Natural killer cell (primary cell): ENCODE measurements at regions of chr10 and their contacts with region 1.

Region 1: DNA sequence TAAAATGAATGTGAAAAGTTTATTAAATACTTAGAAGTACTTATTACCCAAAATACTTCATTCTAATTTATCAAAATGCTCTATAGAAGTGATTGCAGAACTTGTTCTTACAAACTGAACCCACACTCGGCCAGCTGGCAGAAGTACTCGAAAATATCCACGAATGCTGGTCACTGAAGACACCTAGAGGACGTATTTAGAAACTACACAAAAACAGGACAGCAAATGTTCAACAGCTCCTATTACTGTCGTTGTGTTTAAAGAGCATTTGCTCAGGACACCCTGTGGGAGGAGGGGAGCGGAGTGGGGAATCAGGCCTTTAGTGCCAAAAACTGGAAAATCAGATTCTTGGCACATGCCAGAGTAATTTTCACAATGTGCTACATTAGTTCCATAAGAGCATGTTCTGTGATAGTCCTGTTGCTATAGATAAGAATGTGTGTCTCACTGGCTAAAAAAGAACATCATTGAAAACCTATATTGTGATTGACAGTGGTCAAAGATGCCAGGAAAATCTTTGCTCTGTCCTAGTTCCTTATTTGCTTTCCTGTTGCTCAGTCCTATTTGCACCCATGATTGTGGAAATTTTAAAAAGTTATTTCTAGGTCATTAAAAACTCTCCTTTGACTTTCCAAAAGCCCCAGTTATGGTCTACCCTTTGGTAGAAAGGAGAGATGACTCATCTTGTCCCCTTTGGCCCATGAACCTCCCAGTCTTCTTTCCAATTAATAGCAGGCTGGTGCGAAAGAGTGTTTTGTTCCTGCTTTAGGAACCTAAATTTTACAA is 49.0 kb upstream of the NRBF2 start:
- DNase-seq: peak; percentile 20 to 76
- ATAC-seq: peak; percentile 76 to 87 (median 77)
- H3K4me3 ChIP-seq: no peak overlapping the region
- H3K4me3 Mint-ChIP-seq: no peak overlapping the region
- H3K27ac ChIP-seq: no peak overlapping the region
- H3K27ac Mint-ChIP-seq: no peak overlapping the region
- H3K4me1 ChIP-seq: no peaks in the 10 kb centered on the region
- H3K4me1 Mint-ChIP-seq: no peaks in the 10 kb centered on the region
- H3K27me3 ChIP-seq: no peaks in the 10 kb centered on the region
- H3K27me3 Mint-ChIP-seq: peaks cover 14 to 32% of the 10 kb centered on the region in 2 donors
- CTCF ChIP-seq: peak; percentile 75

Region 2: DNA sequence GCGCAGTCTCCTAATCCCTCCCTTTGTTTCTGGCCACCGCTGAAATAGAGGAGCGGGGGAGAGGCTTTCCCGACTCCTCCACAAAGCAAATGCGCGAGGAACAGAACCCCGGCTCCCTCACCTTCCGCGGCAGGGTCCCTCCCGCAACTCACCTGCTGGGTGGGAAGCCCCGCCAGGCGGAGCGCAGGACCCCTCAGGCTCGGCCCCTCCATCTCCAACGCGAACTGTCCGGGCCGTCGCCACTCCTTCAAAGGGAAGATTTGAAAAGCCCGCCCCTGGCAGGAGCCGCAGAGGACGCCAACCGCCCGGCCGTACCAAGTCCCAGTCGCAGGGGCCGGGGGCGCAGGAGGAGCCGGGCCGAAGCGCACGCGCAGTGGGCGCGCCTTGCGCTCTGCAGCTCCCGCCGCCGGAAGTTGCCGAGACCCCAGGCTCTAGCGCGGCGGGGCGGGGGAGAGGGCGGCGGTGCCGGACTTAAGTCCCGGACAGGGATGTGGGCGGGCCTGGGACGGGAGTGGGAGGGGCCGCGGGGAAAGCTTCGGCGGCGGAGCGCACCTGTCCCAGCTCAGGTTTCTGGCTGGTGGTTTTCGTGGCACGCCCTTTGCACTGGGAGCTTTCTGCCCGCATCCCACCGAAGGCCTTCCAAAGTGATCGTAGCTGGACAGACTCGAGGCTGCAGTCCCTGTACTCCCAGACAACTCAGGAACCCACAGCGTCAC is 815.5 kb before region 1 on chr10 and contains the start of gene RTKN2:
- intact Hi-C with region 1: loop called (anchors 10 kb)
- DNase-seq: peak; percentile 65 to 79
- ATAC-seq: peak; percentile 89 to 93 (median 89)
- H3K4me3 ChIP-seq: peak within 1 kb of the TSS; percentile 79
- H3K4me3 Mint-ChIP-seq: peak within 1 kb of the TSS; percentile 94
- H3K27ac ChIP-seq: no peak within 1 kb of the TSS
- H3K27ac Mint-ChIP-seq: peak within 1 kb of the TSS; percentile 34 to 74
- H3K4me1 ChIP-seq: peaks cover 11% of the 10 kb centered on the region
- H3K4me1 Mint-ChIP-seq: peaks cover 17 to 28% of the 10 kb centered on the region in 2 donors
- H3K27me3 ChIP-seq: peaks cover 15% of the 10 kb centered on the region
- H3K27me3 Mint-ChIP-seq: peaks cover 15% of the 10 kb centered on the region in 2 donors
- CTCF ChIP-seq: no peak
- total RNA-seq, gene RTKN2: 0.31 to 0.61 (median 0.33) TPM

Region 3: GRCh38 chr10:62437696-62438095 is 646.4 kb before region 1 on chr10:
- intact Hi-C with region 1: loop called (anchors 1 kb)
- DNase-seq: peak in 1 of 2 donors; percentile 77
- ATAC-seq: peak; percentile 73 to 82 (median 76)
- H3K4me3 ChIP-seq: no peak overlapping the region
- H3K4me3 Mint-ChIP-seq: no peak overlapping the region
- H3K27ac ChIP-seq: no peak overlapping the region
- H3K27ac Mint-ChIP-seq: no peak overlapping the region
- H3K4me1 ChIP-seq: no peaks in the 10 kb centered on the region
- H3K4me1 Mint-ChIP-seq: peaks cover 5% of the 10 kb centered on the region in 2 donors
- H3K27me3 ChIP-seq: peaks cover 4% of the 10 kb centered on the region
- H3K27me3 Mint-ChIP-seq: peaks cover 4 to 11% of the 10 kb centered on the region in 2 donors
- CTCF ChIP-seq: peak; percentile 85

Region 4: DNA sequence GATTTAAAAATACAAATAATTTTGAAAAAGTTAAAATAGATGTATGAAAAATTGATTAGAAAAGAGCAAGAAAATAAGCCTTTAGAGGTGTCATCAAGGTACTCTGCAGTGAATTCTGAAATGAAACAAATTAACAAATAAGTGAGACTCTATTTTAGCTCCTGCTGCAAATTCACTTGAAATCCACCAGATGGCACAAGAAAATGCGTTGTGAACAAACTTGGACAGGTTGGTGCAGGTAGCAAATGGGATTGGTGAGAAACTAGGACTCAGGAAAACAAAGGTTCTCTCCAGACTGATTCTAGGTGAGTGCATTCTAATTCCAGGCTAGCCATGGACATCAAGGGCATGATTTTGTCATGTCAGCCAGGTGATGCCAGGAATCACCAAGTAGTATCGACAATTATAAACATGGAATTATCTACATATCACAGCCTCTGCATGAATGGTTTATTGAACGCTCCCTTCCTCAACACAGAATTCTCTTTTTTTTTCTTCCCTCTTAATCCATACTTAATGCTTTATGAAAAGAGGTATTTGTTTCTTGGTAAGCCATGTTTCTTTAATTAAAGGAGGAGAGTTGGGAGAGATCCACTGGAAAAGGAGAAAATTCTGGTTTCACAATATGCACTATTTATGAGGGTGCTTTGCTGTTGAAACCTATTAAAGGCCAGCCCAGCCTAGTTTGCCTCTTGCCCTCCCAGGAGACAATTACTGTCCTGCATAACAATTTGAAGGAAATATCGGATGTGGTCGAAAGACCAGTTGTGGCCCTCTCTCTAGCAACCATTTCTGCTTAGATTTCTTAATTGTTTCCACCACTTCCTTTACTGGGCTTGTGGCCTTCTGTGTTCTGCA is 591.9 kb before region 1 on chr10:
- intact Hi-C with region 1: loop called (anchors 10 kb)
- DNase-seq: peak in 1 of 2 donors; percentile 57
- ATAC-seq: no peak
- H3K4me3 ChIP-seq: no peak overlapping the region
- H3K4me3 Mint-ChIP-seq: no peak overlapping the region
- H3K27ac ChIP-seq: no peak overlapping the region
- H3K27ac Mint-ChIP-seq: no peak overlapping the region
- H3K4me1 ChIP-seq: peaks cover 7% of the 10 kb centered on the region
- H3K4me1 Mint-ChIP-seq: peaks cover 5 to 9% of the 10 kb centered on the region in 2 donors
- H3K27me3 ChIP-seq: peaks cover under 1% of the 10 kb centered on the region
- H3K27me3 Mint-ChIP-seq: peaks cover 7 to 17% of the 10 kb centered on the region in 2 donors
- CTCF ChIP-seq: peak; percentile 25

Region 5: DNA sequence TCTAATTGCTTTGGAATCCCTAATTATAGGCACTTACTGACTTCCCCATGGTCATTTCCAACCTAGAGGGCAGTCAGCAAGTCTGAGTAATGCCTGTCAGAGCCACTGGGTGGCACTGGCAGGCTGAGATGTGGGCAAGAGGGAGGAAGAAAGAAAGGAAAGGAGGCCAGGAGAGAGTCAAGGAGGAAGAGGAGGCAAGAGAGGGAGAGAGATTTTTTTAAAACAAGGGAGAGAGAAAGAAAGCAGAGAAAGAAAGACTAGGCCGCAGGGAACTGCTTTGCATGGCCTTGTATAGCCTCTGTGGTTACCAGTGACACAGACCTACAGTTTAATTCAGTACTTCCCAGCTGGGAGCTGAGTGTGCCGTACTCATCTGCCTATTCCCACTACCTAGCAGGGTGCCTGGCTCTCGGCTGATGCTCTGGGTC is 490.0 kb before region 1 on chr10:
- intact Hi-C with region 1: loop called (anchors 1 kb)
- DNase-seq: peak; percentile 35 to 75
- ATAC-seq: peak; percentile 67 to 95 (median 87)
- H3K4me3 ChIP-seq: no peak overlapping the region
- H3K4me3 Mint-ChIP-seq: no peak overlapping the region
- H3K27ac ChIP-seq: no peak overlapping the region
- H3K27ac Mint-ChIP-seq: no peak overlapping the region
- H3K4me1 ChIP-seq: no peaks in the 10 kb centered on the region
- H3K4me1 Mint-ChIP-seq: peaks cover 6% of the 10 kb centered on the region in 2 donors
- H3K27me3 ChIP-seq: no peaks in the 10 kb centered on the region
- H3K27me3 Mint-ChIP-seq: peaks cover 0 to 12% of the 10 kb centered on the region in 2 donors
- CTCF ChIP-seq: peak; percentile 92

Region 6: GRCh38 chr10:62610649-62611229 is 473.4 kb before region 1 on chr10:
- intact Hi-C with region 1: loop called (anchors 1 kb)
- DNase-seq: peak; percentile 56 to 86
- ATAC-seq: peak; percentile 85 to 96 (median 88)
- H3K4me3 ChIP-seq: no peak overlapping the region
- H3K4me3 Mint-ChIP-seq: no peak overlapping the region
- H3K27ac ChIP-seq: no peak overlapping the region
- H3K27ac Mint-ChIP-seq: no peak overlapping the region
- H3K4me1 ChIP-seq: peaks cover 11% of the 10 kb centered on the region
- H3K4me1 Mint-ChIP-seq: peaks cover 20 to 23% of the 10 kb centered on the region in 2 donors
- H3K27me3 ChIP-seq: no peaks in the 10 kb centered on the region
- H3K27me3 Mint-ChIP-seq: no peaks in the 10 kb centered on the region
- CTCF ChIP-seq: peak; percentile 96

Region 7: DNA sequence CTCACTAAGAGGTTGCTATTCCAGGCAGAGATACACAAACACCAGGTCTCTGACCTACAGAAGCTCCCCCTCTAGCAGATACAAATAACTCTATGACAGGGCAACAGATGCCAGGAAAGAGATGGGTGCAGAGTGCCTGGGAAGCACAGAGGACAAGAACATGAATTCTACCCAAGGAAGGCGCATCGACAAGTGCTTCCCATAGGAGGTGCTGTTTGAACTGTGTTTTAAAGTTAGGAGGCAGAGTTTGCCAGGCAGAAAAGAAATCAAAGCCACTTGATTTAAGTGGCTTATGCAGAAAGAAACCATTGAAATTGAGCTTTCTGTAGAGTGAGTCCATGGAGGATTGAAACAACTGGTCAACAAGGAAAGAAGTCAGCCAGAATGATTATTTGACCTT is 232.7 kb before region 1 on chr10:
- intact Hi-C with region 1: no loop called
- DNase-seq: peak in 1 of 2 donors; percentile 41
- ATAC-seq: no peak
- H3K4me3 ChIP-seq: no peak overlapping the region
- H3K4me3 Mint-ChIP-seq: no peak overlapping the region
- H3K27ac ChIP-seq: no peak overlapping the region
- H3K27ac Mint-ChIP-seq: peak overlapping the region in 1 of 2 donors; percentile 35
- H3K4me1 ChIP-seq: peaks cover 32% of the 10 kb centered on the region
- H3K4me1 Mint-ChIP-seq: peaks cover 55 to 56% of the 10 kb centered on the region in 2 donors
- H3K27me3 ChIP-seq: no peaks in the 10 kb centered on the region
- H3K27me3 Mint-ChIP-seq: no peaks in the 10 kb centered on the region
- CTCF ChIP-seq: peak; percentile 37

Region 8: DNA sequence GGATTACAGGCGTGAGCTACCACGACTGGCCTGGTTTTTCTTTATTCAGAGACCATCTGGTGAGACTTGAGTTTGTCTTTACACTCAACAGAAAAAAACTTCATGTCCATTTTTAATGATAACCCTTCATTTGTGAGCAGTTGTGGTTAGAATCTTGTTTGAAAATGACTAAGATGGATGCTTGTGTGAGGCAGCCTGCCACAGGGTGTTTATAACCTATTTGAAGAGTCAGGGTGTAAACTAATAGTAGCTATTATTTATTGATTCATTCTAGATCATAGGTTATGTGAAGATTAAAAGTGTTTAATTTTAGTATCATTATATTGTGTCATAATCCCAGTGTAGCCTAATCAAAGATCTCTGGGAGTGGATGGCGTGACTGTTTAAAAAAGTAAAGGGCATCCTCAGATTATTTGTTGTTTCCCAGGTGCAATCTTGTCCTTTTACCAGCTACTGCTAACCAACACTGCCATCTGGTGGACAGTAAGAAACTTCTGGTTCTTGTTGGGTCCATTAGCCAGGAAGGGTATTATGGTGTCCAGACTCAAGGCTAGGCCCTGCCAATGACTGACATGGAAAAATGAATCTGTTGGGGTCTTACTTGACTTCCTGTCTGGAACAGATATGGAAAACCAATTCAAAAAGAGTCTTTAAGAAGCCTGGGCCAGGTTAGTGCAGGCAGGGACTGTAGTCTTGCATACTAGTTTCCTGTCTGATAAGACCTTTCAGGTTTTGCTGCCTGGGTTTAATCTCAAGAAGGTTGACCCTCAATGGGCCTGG is 73.9 kb after region 1 on chr10:
- intact Hi-C with region 1: loop called (anchors 1 kb)
- DNase-seq: peak in 1 of 2 donors; percentile 92
- ATAC-seq: peak; percentile 75 to 86 (median 78)
- H3K4me3 ChIP-seq: no peak overlapping the region
- H3K4me3 Mint-ChIP-seq: no peak overlapping the region
- H3K27ac ChIP-seq: no peak overlapping the region
- H3K27ac Mint-ChIP-seq: no peak overlapping the region
- H3K4me1 ChIP-seq: no peaks in the 10 kb centered on the region
- H3K4me1 Mint-ChIP-seq: peaks cover 12 to 22% of the 10 kb centered on the region in 2 donors
- H3K27me3 ChIP-seq: no peaks in the 10 kb centered on the region
- H3K27me3 Mint-ChIP-seq: no peaks in the 10 kb centered on the region
- CTCF ChIP-seq: peak; percentile 82